A673 (cell line): ENCODE measurements at regions of chr14 and their contacts with region 1.

Region 1: DNA sequence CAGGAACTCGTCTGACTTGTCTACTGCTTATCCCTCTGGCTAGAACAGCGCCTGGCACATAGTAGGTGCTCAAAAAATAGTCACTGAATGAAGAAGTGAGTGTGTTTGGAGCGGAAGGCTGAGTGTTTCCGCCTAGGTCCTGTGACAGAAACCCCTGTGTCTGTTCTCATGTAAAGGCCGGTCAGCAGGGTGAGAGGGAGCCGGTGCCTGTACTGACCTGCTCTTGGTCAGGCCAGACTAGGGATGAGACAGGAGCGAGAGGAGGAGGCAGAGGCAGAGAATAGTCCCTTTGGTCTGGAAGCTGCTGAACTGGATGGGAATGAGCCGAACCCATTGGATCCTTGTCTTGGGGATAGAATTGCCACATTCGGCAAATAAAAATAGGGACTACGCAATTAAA is 20.6 kb downstream of the VRTN start:
- DNase-seq: no peak
- H3K4me3 ChIP-seq: no peak overlapping the region
- H3K27ac ChIP-seq: no peak overlapping the region
- H3K4me1 ChIP-seq: no peaks in the 10 kb centered on the region
- H3K27me3 ChIP-seq: no peaks in the 10 kb centered on the region
- CTCF ChIP-seq: no peak

Region 2: GRCh38 chr14:74223016-74223415 is 145.8 kb before region 1 on chr14:
- CTCF ChIA-PET with region 1: no interaction called
- POLR2A ChIA-PET with region 1: interaction called, 15 read pairs
- intact Hi-C with region 1: no loop called
- DNase-seq: no peak
- H3K4me3 ChIP-seq: no peak overlapping the region
- H3K27ac ChIP-seq: no peak overlapping the region
- H3K4me1 ChIP-seq: no peaks in the 10 kb centered on the region
- H3K27me3 ChIP-seq: peaks cover 5% of the 10 kb centered on the region
- CTCF ChIP-seq: no peak

Region 3: DNA sequence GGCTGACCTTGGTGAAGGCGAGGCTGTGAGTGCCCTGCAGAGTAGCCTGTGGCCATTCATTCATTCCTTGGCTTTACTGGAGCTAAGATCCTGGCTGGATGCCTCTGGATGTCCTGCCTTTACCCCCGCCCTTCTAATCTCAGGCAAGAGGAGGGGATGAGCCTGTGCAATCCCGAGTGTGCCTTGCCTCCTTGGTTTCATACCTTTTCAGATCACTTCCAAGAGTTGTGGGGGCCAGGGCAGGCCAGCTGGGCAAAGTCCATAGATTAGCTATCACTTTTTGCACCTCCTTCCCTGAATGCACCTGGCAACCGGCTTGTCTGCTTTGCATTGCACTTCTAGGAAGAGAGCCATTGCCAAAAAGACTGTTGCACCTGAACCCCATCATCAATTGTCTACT is 19.1 kb before region 1 on chr14:
- CTCF ChIA-PET with region 1: no interaction called
- POLR2A ChIA-PET with region 1: interaction called, 12 read pairs
- intact Hi-C with region 1: no loop called
- DNase-seq: no peak
- H3K4me3 ChIP-seq: no peak overlapping the region
- H3K27ac ChIP-seq: no peak overlapping the region
- H3K4me1 ChIP-seq: no peaks in the 10 kb centered on the region
- H3K27me3 ChIP-seq: no peaks in the 10 kb centered on the region
- CTCF ChIP-seq: no peak